Activated B cell treated with CpG ODN at 0.5 μM for 24 hours (primary cell): ENCODE measurements at regions of chr1 and their contacts with region 1.

Region 1: DNA sequence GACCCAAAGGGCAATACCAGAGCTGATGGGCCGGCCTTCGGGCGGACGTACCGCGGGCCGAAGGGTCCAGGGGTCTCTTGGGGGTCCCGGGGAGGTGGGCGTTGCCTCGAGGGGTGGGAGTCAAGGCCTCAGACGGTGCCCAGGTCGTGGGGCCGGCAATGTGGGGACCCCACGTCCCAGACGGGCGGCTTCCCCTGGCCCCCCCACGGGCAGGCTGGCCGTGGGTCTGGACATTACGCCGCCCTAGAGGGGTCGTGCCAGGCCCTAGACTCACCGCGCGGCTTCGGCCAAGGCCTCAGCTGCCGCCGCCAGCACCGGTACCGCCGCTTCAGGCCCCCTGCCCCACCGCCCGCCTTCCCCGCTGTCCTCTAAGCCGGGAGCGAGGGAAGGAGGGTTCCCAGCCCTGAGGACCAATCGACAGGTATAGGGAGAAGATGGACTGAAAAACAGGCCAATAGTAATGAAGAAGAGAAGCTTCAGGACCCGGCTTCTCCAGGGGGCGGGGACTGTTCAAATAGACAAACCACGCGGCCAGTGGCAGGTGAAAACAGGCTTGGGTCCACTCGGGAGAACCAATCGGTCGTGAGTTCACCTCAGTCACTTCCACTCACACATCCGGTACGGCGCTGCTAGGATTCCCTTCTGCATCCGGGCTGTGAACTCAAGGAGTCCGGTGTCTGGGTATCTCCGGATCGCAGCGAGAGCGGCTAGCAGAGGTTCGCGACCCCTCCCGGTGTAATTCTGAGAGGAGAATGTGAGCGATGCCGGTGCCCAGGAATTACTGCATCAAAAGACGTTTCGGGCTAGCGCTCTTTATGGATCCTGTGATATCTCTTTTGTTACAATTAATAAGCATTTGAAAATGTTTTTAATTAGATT is at the start of gene MTOR:
- DNase-seq: peak; percentile 80
- ATAC-seq: peak; percentile 98
- H3K4me3 Mint-ChIP-seq: peak within 1 kb of the TSS; percentile 89
- H3K27ac Mint-ChIP-seq: peak within 1 kb of the TSS; percentile 87
- H3K4me1 Mint-ChIP-seq: peaks cover 16% of the 10 kb centered on the region
- H3K27me3 Mint-ChIP-seq: no peaks in the 10 kb centered on the region
- CTCF ChIP-seq: no peak
- total RNA-seq, gene MTOR: 49.9 and 55.1 TPM in 2 replicates

Region 2: GRCh38 chr1:9874959-9875635 is 1387.3 kb before region 1 on chr1:
- CTCF ChIA-PET with region 1: no interaction called
- POLR2A ChIA-PET with region 1: no interaction called
- intact Hi-C with region 1: no loop called
- DNase-seq: peak; percentile 59
- ATAC-seq: peak; percentile 97
- H3K4me3 Mint-ChIP-seq: no peak overlapping the region
- H3K27ac Mint-ChIP-seq: peak overlapping the region; percentile 11
- H3K4me1 Mint-ChIP-seq: peaks cover 5% of the 10 kb centered on the region
- H3K27me3 Mint-ChIP-seq: no peaks in the 10 kb centered on the region
- CTCF ChIP-seq: no peak

Region 3: GRCh38 chr1:11012250-11013171 is 249.9 kb before region 1 on chr1 and contains the start of gene TARDBP:
- CTCF ChIA-PET with region 1: no interaction called
- POLR2A ChIA-PET with region 1: interaction called, 4 read pairs
- intact Hi-C with region 1: loop called (anchors 5 kb)
- DNase-seq: peak; percentile 93
- ATAC-seq: peak; percentile 87
- H3K4me3 Mint-ChIP-seq: peak within 1 kb of the TSS; percentile 89
- H3K27ac Mint-ChIP-seq: peak within 1 kb of the TSS; percentile 99
- H3K4me1 Mint-ChIP-seq: peaks cover 35% of the 10 kb centered on the region
- H3K27me3 Mint-ChIP-seq: no peaks in the 10 kb centered on the region
- CTCF ChIP-seq: no peak
- total RNA-seq, gene TARDBP: 170 and 193 TPM in 2 replicates

Region 4: GRCh38 chr1:11059990-11060830 is 202.2 kb before region 1 on chr1 and contains the start of gene SRM:
- CTCF ChIA-PET with region 1: no interaction called
- POLR2A ChIA-PET with region 1: interaction called, 5 read pairs
- intact Hi-C with region 1: loop called (anchors 5 kb)
- DNase-seq: peak; percentile 96
- ATAC-seq: peak; percentile 98
- H3K4me3 Mint-ChIP-seq: peak within 1 kb of the TSS; percentile 95
- H3K27ac Mint-ChIP-seq: peak within 1 kb of the TSS; percentile 86
- H3K4me1 Mint-ChIP-seq: peaks cover 18% of the 10 kb centered on the region
- H3K27me3 Mint-ChIP-seq: no peaks in the 10 kb centered on the region
- CTCF ChIP-seq: no peak
- total RNA-seq, gene SRM: 106 and 119 TPM in 2 replicates

Region 5: GRCh38 chr1:11132563-11133292 is 129.7 kb before region 1 on chr1:
- CTCF ChIA-PET with region 1: no interaction called
- POLR2A ChIA-PET with region 1: interaction called, 10 read pairs
- intact Hi-C with region 1: no loop called
- DNase-seq: no peak
- ATAC-seq: no peak
- H3K4me3 Mint-ChIP-seq: no peak overlapping the region
- H3K27ac Mint-ChIP-seq: no peak overlapping the region
- H3K4me1 Mint-ChIP-seq: no peaks in the 10 kb centered on the region
- H3K27me3 Mint-ChIP-seq: no peaks in the 10 kb centered on the region
- CTCF ChIP-seq: no peak

Region 6: GRCh38 chr1:11272832-11273594 is 10.6 kb after region 1 on chr1 and contains the start of gene UBIAD1:
- CTCF ChIA-PET with region 1: no interaction called
- POLR2A ChIA-PET with region 1: interaction called, 79 read pairs
- intact Hi-C with region 1: loop called (anchors 1 kb)
- DNase-seq: peak; percentile 80
- ATAC-seq: peak; percentile 86
- H3K4me3 Mint-ChIP-seq: peak within 1 kb of the TSS; percentile 93
- H3K27ac Mint-ChIP-seq: peak within 1 kb of the TSS; percentile 96
- H3K4me1 Mint-ChIP-seq: peaks cover 35% of the 10 kb centered on the region
- H3K27me3 Mint-ChIP-seq: no peaks in the 10 kb centered on the region
- CTCF ChIP-seq: no peak
- total RNA-seq, gene UBIAD1: 23.3 and 27.8 TPM in 2 replicates

Region 7: GRCh38 chr1:11735854-11736745 is 473.7 kb after region 1 on chr1 and contains the start of gene AGTRAP:
- CTCF ChIA-PET with region 1: no interaction called
- POLR2A ChIA-PET with region 1: interaction called, 4 read pairs
- intact Hi-C with region 1: loop called (anchors 5 kb)
- DNase-seq: peak; percentile 80
- ATAC-seq: peak; percentile 88
- H3K4me3 Mint-ChIP-seq: peak within 1 kb of the TSS; percentile 93
- H3K27ac Mint-ChIP-seq: peak within 1 kb of the TSS; percentile 79
- H3K4me1 Mint-ChIP-seq: peaks cover 40% of the 10 kb centered on the region
- H3K27me3 Mint-ChIP-seq: no peaks in the 10 kb centered on the region
- CTCF ChIP-seq: no peak
- total RNA-seq, gene AGTRAP: 10.9 and 13.9 TPM in 2 replicates